ENCODE measurements at regions of chr14 and their contacts with region 1.

Region 1: GRCh38 chr14:22973217-22974032 is 8.9 kb downstream of the AJUBA start:
- DNase-seq: peak; percentile 55
- ATAC-seq: no peak
- H3K4me3 Mint-ChIP-seq: no peak overlapping the region
- H3K27ac Mint-ChIP-seq: no peak overlapping the region
- H3K4me1 Mint-ChIP-seq: no peaks in the 10 kb centered on the region
- H3K27me3 Mint-ChIP-seq: peaks cover 7% of the 10 kb centered on the region

Region 2: DNA sequence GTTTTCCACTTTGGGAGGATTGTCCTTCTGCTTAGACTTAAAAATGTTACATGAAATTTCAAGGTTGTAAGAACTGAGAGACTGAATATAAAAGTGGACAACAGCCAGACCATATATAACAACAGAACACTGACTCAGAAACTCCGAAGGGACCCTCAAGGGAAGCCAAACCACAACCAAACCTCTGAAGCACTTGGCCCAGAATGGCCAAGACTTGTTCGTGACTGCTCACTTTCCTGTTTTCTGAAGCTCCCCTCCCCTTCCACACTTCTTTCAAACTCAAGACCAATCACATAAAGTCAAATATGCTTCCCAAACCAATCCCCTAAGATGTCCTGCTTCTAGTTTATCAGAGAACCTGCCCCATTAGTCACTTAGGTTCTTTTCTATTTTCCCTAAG is 342.9 kb before region 1 on chr14:
- CTCF ChIA-PET with region 1: no interaction called
- POLR2A ChIA-PET with region 1: no interaction called
- DNase-seq: no peak
- ATAC-seq: no peak
- H3K4me3 Mint-ChIP-seq: no peak overlapping the region
- H3K27ac Mint-ChIP-seq: no peak overlapping the region
- H3K4me1 Mint-ChIP-seq: no peaks in the 10 kb centered on the region
- H3K27me3 Mint-ChIP-seq: peaks cover 14% of the 10 kb centered on the region

Region 3: GRCh38 chr14:22955702-22956569 is 17.5 kb before region 1 on chr14:
- CTCF ChIA-PET with region 1: interaction called, 47 read pairs
- POLR2A ChIA-PET with region 1: interaction called, 5 read pairs
- DNase-seq: no peak
- ATAC-seq: no peak
- H3K4me3 Mint-ChIP-seq: peak overlapping the region; percentile 95
- H3K27ac Mint-ChIP-seq: peak overlapping the region; percentile 92
- H3K4me1 Mint-ChIP-seq: peaks cover 29% of the 10 kb centered on the region
- H3K27me3 Mint-ChIP-seq: no peaks in the 10 kb centered on the region

Region 4: DNA sequence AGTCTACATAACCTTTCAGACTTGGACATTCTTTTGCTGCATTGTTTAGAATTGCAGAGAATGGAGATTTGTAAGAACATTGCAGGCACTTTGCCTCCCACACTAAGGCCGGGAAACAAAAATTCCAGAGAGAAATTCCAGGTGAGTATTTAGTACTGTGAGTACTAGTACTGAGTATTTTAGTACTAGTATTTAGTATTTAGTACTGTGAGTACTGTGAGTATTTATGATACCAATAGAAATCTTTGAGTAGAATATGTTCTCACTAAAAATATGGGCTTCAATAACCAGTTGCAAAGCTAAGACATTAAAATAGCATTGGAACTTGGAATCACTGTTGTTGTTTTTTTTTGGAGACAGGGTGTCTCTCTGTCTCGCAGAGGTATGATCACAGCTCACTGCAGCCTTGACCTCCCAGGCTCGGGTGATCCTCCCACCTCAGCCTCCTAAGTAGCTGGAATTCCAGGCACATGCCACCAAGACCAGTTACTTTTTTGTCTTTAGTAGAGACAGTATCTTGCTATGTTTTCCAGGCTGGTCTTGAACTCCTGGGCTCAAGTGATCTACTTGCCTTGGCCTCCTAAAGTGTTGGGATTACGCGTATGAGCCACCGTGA is 11.3 kb before region 1 on chr14:
- CTCF ChIA-PET with region 1: interaction called, 47 read pairs
- POLR2A ChIA-PET with region 1: interaction called, 5 read pairs
- DNase-seq: no peak
- ATAC-seq: no peak
- H3K4me3 Mint-ChIP-seq: no peak overlapping the region
- H3K27ac Mint-ChIP-seq: no peak overlapping the region
- H3K4me1 Mint-ChIP-seq: peaks cover 8% of the 10 kb centered on the region
- H3K27me3 Mint-ChIP-seq: peaks cover 5% of the 10 kb centered on the region

Region 5: GRCh38 chr14:23006544-23007419 is 33.4 kb after region 1 on chr14:
- CTCF ChIA-PET with region 1: interaction called, 13 read pairs
- POLR2A ChIA-PET with region 1: no interaction called
- DNase-seq: peak; percentile 98
- ATAC-seq: peak; percentile 99
- H3K4me3 Mint-ChIP-seq: peak overlapping the region; percentile 94
- H3K27ac Mint-ChIP-seq: peak overlapping the region; percentile 98
- H3K4me1 Mint-ChIP-seq: peaks cover 51% of the 10 kb centered on the region
- H3K27me3 Mint-ChIP-seq: no peaks in the 10 kb centered on the region

Region 6: DNA sequence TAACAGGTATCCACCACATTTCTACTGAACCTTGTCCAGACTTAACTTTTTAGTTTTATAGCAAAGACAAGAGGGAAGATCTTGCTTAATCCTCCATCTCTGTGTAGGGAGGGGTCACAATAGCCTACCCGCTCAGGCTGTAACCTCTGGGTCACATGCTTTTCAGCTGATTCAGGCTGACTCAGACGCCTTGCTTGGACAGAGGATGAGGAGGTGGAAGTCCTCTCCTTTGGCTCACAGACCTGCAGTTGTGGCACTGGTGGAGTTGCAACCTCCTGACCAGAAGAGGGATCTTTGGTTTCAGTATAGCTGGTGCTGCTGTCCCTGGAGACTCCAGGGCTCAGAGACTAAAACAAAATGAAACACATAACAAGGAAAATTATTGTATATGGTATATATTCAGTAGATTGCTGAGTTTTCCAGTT is 105.3 kb after region 1 on chr14:
- CTCF ChIA-PET with region 1: no interaction called
- POLR2A ChIA-PET with region 1: no interaction called
- DNase-seq: no peak
- ATAC-seq: no peak
- H3K4me3 Mint-ChIP-seq: no peak overlapping the region
- H3K27ac Mint-ChIP-seq: no peak overlapping the region
- H3K4me1 Mint-ChIP-seq: no peaks in the 10 kb centered on the region
- H3K27me3 Mint-ChIP-seq: no peaks in the 10 kb centered on the region

Measured in activated CD8-positive, alpha-beta T cell treated with anti-CD3 and anti-CD28 coated beads, Interleukin-2, amount 10 ng/mL, durations not matched to agents 7 days and 5 days (primary cell).